SK-N-SH (cell line): ENCODE measurements at regions of chr9 and their contacts with region 1.

Region 1: DNA sequence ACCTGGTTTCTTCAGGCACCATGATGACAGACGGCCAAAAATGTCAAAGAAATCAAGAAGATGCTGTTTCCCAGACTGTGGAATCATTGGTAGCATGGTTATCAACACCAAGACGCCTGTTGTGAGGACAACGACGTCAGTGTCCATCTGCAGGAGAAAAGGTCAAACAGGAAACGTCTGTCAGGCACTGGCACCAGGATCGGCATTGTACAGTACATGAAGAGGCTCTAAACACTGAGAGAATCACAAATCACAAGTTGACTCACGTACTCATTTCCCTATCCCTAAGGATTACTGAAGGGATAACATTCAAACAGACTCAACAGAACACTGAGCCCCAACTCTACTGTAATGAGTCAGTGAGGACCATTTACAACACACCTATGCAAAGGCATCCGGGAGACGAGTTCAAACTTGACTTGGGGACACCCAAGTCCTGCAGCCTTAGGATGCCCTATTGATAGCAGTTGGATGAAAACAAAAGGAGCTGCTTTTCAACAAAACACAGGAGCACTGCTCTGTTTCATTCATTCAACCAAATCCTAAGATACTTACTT is 21.0 kb downstream of the TSC1 start:
- DNase-seq: no peak
- H3K4me3 ChIP-seq: no peak overlapping the region
- H3K27ac ChIP-seq: no peak overlapping the region
- H3K4me1 ChIP-seq: no peaks in the 10 kb centered on the region
- H3K27me3 ChIP-seq: no peaks in the 10 kb centered on the region
- CTCF ChIP-seq: no peak
- EP300 ChIP-seq: no peak
- RAD21 ChIP-seq: no peak

Region 2: DNA sequence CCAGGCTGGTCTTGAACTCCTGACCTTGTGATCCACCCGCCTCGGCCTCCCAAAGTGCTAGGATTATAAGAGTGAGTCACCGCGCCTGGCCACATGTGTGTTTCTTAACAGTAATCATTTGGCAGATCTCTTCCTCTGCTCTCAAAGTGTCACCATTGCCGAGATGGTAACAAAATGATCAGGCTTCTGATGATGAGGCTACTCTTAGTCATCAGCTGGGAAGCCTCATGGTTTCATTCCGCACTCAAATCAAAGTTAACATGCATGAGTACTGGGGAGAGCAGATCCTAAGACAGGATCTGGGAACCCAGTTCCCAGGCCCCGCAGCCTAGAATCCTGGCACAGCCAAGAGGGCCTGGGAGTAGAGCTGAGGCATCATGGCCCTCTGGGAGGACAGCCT is 313.6 kb before region 1 on chr9:
- CTCF ChIA-PET with region 1: no interaction called
- POLR2A ChIA-PET with region 1: no interaction called
- DNase-seq: no peak
- H3K4me3 ChIP-seq: no peak overlapping the region
- H3K27ac ChIP-seq: peak overlapping the region in 1 of 2 experiments; percentile 77; a peak in 2 of 4 replicates
- H3K4me1 ChIP-seq: no peaks in the 10 kb centered on the region; a peak in 1 of 4 replicates
- H3K27me3 ChIP-seq: no peaks in the 10 kb centered on the region
- CTCF ChIP-seq: no peak
- EP300 ChIP-seq: peak in 1 of 2 experiments; percentile 43; a peak in 1 of 4 replicates
- RAD21 ChIP-seq: no peak

Region 3: GRCh38 chr9:132780230-132781007 is 143.0 kb before region 1 on chr9:
- CTCF ChIA-PET with region 1: no interaction called
- POLR2A ChIA-PET with region 1: no interaction called
- DNase-seq: peak; percentile 52
- H3K4me3 ChIP-seq: no peak overlapping the region
- H3K27ac ChIP-seq: no peak overlapping the region
- H3K4me1 ChIP-seq: peaks cover 0 to 9% of the 10 kb centered on the region in 2 experiments; a peak in 1 of 4 replicates
- H3K27me3 ChIP-seq: no peaks in the 10 kb centered on the region; the same call in 1 of the 2 replicates
- CTCF ChIP-seq: no peak
- EP300 ChIP-seq: no peak
- RAD21 ChIP-seq: no peak

Region 4: GRCh38 chr9:132908635-132909034 is 14.8 kb before region 1 on chr9:
- CTCF ChIA-PET with region 1: interaction called, 85 read pairs
- POLR2A ChIA-PET with region 1: interaction called, 3 read pairs
- DNase-seq: no peak
- H3K4me3 ChIP-seq: no peak overlapping the region
- H3K27ac ChIP-seq: no peak overlapping the region
- H3K4me1 ChIP-seq: no peaks in the 10 kb centered on the region
- H3K27me3 ChIP-seq: no peaks in the 10 kb centered on the region
- CTCF ChIP-seq: no peak
- EP300 ChIP-seq: no peak
- RAD21 ChIP-seq: no peak